ENCODE measurements at regions of chr17 and their contacts with region 1.

Region 1: DNA sequence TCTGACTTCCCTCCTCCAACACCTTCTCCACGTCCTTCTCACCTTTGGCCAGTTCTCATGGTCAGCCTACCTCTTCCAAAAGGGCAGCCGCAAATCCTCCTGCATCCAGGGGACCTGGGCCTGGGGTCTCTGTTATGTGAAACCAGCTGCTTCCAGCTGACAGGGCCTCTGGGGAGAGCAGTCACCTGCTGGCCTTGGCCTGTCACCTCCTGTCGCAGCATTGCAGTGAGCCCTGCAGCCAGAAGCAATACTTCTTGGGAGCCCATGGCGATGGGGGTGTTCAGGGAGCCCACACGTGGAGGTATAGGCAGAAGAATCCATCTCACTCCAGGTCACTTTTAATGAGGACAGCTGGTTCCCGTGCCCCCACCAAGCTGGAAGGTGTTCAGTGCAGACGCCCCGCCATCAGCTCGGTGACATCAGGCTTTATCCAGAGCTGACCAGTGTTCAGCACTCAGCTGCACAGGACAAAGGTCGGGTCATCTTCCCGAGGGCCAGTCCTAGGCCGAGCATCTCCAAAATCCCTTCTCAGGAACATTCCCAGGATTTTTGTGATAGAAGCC is 1.7 kb upstream of the SLC47A2 start:
- DNase-seq: no peak
- H3K4me3 ChIP-seq: no peak overlapping the region
- H3K27ac ChIP-seq: no peak overlapping the region
- H3K4me1 ChIP-seq: no peaks in the 10 kb centered on the region
- CTCF ChIP-seq: no peak

Region 2: GRCh38 chr17:19787733-19788357 is 69.7 kb after region 1 on chr17:
- CTCF ChIA-PET with region 1: no interaction called
- POLR2A ChIA-PET with region 1: interaction called, 10 read pairs
- intact Hi-C with region 1: no loop called
- DNase-seq: no peak
- H3K4me3 ChIP-seq: no peak overlapping the region
- H3K27ac ChIP-seq: no peak overlapping the region
- H3K4me1 ChIP-seq: no peaks in the 10 kb centered on the region
- CTCF ChIP-seq: no peak